ENCODE measurements at regions of chr1 and their contacts with region 1.

Region 1: GRCh38 chr1:23184212-23184934 is 15.7 kb upstream of the LUZP1 start:
- DNase-seq: peak; percentile 23
- H3K4me3 ChIP-seq: peak overlapping the region in 3 of 4 donors; percentile 13 to 40 (median 20)
- H3K27ac ChIP-seq: no peak overlapping the region
- H3K4me1 ChIP-seq: peaks cover 0 to 14% (median 9%) of the 10 kb centered on the region in 4 donors
- H3K27me3 ChIP-seq: no peaks in the 10 kb centered on the region
- CTCF ChIP-seq: peak; percentile 83 to 97 (median 90)
- EP300 ChIP-seq: no peak
- POLR2A ChIP-seq: no peak

Region 2: DNA sequence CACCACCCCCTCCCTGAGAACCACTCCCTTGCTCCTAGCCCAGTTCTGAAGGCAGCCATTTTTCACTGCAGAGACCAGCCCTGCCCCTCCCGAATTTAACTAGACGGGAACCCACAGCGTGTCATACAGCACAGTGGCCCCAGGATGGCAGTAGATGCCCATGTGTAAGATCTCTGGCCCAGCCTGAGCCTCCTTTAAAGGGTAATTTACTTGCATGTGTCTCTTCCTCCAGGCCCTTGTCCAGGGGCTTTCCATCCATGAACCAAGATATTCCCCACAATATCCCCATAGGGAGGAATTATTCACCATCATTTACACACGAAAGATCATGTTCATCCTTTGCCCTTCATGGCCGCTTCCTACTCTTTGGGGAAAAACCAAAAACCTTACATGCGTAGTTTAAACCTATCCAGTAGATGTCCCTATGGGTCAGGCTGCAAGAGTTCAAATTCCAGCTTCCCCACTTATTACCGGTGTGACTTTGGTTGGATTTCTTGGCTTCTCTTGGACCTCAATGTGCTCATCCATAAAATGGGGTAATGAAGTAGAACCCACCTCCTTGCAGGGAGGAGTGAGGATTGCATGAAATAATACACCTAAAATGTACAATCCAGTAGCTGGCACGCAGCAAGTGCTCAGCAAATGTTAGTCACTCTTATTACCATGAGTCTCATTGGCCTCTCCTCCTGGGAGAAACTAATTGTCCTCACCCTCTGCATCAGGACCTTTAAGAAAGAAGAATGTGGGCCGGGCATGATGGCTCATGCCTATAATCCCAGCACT is 207.7 kb before region 1 on chr1:
- in situ Hi-C with region 1: loop called in 3 of 4 experiments (anchors 10 to 25 kb)
- intact Hi-C with region 1: loop called (anchors 10 kb)
- DNase-seq: peak; percentile 63
- H3K4me3 ChIP-seq: no peak overlapping the region
- H3K27ac ChIP-seq: no peak overlapping the region
- H3K4me1 ChIP-seq: peaks cover 0 to 3% (median 0%) of the 10 kb centered on the region in 4 donors
- H3K27me3 ChIP-seq: peaks cover 8% of the 10 kb centered on the region
- CTCF ChIP-seq: peak; percentile 44 to 83 (median 72)
- EP300 ChIP-seq: no peak
- POLR2A ChIP-seq: no peak

Region 3: GRCh38 chr1:23092447-23092846 is 91.9 kb before region 1 on chr1:
- in situ Hi-C with region 1: loop called (anchors 5 kb)
- intact Hi-C with region 1: no loop called
- DNase-seq: no peak
- H3K4me3 ChIP-seq: no peak overlapping the region
- H3K27ac ChIP-seq: no peak overlapping the region
- H3K4me1 ChIP-seq: no peaks in the 10 kb centered on the region
- H3K27me3 ChIP-seq: no peaks in the 10 kb centered on the region
- CTCF ChIP-seq: no peak
- EP300 ChIP-seq: no peak
- POLR2A ChIP-seq: no peak

Region 4: DNA sequence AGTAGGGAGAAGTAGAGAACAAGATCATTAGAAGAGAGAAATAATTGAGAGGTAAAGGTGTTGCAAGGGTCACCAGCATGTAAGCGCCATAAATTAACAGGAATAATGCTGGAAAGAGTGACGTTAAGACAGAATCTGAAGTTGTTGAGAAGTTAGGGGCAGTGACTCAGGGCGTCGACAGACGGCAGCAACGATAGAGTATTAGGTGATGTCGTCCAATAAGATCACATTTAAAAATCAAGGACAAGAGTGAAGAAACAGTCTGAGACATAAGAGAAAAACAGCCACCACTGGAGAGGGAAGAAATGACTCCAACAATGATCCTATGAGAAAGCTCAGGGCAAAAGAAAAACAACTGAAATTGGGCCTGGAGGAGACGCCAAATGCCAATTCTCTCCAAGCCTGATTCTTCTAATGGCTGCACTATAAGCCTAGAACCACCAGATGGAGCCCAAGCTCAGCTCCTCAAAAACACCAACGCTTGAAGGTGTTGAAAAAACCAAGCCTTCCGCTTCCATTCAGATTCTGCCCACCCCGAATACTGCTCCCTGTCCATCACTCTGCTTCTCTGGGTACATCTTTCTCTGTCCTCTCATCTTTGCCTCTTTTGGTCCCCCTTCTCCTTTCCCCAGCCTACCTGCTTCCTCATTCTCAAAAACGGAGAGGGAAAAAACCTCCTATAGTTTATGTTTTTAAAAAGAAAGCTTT is 85.8 kb before region 1 on chr1:
- in situ Hi-C with region 1: loop called (anchors 5 kb)
- intact Hi-C with region 1: loop called (anchors 1 kb)
- DNase-seq: peak; percentile 65
- H3K4me3 ChIP-seq: no peak overlapping the region
- H3K27ac ChIP-seq: no peak overlapping the region
- H3K4me1 ChIP-seq: peaks cover 28 to 56% (median 34%) of the 10 kb centered on the region in 4 donors
- H3K27me3 ChIP-seq: no peaks in the 10 kb centered on the region
- CTCF ChIP-seq: peak; percentile 87 to 96 (median 93)
- EP300 ChIP-seq: no peak
- POLR2A ChIP-seq: no peak

Measured in transverse colon (tissue), 4 donors.